ENCODE measurements at regions of chr1 and their contacts with region 1.

Region 1: DNA sequence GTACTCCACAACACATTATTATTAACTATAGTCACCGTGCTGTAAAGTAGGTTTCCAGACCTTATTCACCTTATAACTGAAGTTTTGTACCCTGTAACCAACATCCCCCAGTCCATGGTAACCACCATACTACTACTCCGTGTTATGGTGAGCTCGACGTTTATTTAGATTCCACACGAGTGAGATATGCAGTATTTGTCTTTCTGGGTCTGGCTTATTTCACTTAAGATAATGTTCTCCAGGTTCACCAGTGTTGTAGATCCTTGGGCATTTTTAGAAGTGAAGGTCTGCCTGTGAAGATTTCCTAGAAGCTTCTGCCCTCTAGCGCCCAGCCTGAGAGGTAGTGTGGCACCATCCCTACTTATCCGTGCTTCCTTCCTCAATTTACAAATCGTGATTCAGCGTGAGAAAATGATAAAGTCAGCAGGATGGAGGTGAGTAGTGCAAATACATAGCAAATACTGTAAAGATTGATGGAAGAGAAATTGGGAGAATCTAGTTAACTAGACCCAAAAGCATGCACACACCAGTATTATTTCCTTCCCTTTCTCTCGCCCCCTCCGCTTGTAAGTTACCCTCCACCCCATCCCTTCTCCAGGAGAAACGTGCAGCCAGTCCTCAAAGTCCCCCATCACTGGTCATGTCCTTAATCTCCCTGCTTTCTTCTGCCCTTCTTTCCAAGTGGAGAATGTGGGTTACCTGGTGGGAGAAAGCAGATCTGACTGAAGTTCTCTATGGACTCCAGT is 36.0 kb upstream of the DISC1 start:
- DNase-seq: peak; percentile 59
- ATAC-seq: peak; percentile 74
- H3K4me3 Mint-ChIP-seq: no peak overlapping the region
- H3K27ac Mint-ChIP-seq: no peak overlapping the region
- H3K4me1 Mint-ChIP-seq: no peaks in the 10 kb centered on the region
- H3K27me3 Mint-ChIP-seq: peaks cover 2% of the 10 kb centered on the region

Region 2: DNA sequence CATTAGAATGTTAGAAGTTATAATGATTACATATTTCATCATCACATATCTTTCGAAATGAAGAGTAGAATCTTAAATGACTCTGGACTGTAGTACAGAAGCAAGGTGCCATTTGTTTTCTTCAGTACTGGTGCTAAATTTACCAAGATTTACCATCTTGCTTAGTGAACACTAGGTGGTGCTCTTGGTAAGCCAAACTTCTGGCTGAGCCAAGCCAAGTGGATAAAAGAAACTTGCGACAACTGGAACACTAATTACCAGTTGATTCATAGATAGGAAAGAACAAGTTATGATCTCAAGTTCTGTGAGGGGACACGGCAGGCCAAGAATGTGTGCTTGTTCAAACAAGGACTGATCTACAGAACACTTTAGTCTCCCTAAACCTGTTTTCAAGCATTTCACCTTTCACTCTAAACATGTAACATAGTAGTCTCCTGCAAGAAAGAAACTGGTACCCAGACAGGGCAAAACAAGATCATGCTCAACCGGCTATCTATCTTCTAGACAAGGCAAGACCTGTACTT is 232.7 kb before region 1 on chr1:
- CTCF ChIA-PET with region 1: interaction called, 18 read pairs
- POLR2A ChIA-PET with region 1: no interaction called
- DNase-seq: peak; percentile 57
- ATAC-seq: peak; percentile 85
- H3K4me3 Mint-ChIP-seq: no peak overlapping the region
- H3K27ac Mint-ChIP-seq: peak overlapping the region; percentile 4
- H3K4me1 Mint-ChIP-seq: peaks cover 8% of the 10 kb centered on the region
- H3K27me3 Mint-ChIP-seq: no peaks in the 10 kb centered on the region